CD4-positive, alpha-beta memory T cell (primary cell): ENCODE measurements at regions of chr7 and their contacts with region 1.

Region 1: GRCh38 chr7:39465055-39465929 is 100.9 kb upstream of the YAE1 start:
- DNase-seq: peak in 4 of 5 donors; percentile 16 to 25 (median 19)
- H3K4me3 ChIP-seq: no peak overlapping the region
- H3K4me3 Mint-ChIP-seq: peak overlapping the region in 2 of 8 donors; percentile 17 to 46
- H3K27ac ChIP-seq: no peak overlapping the region
- H3K27ac Mint-ChIP-seq: no peak overlapping the region
- H3K4me1 ChIP-seq: no peaks in the 10 kb centered on the region
- H3K4me1 Mint-ChIP-seq: peaks cover 2 to 9% (median 5%) of the 10 kb centered on the region in 4 donors
- H3K27me3 ChIP-seq: no peaks in the 10 kb centered on the region
- H3K27me3 Mint-ChIP-seq: peaks cover 3 to 16% of the 10 kb centered on the region in 2 donors

Region 2: GRCh38 chr7:38600746-38601145 is 864.5 kb before region 1 on chr7:
- CTCF ChIA-PET with region 1: no interaction called
- POLR2A ChIA-PET with region 1: no interaction called
- intact Hi-C with region 1: no loop called
- DNase-seq: no peak
- H3K4me3 ChIP-seq: no peak overlapping the region
- H3K4me3 Mint-ChIP-seq: no peak overlapping the region
- H3K27ac ChIP-seq: no peak overlapping the region
- H3K27ac Mint-ChIP-seq: no peak overlapping the region
- H3K4me1 ChIP-seq: no peaks in the 10 kb centered on the region
- H3K4me1 Mint-ChIP-seq: no peaks in the 10 kb centered on the region
- H3K27me3 ChIP-seq: no peaks in the 10 kb centered on the region
- H3K27me3 Mint-ChIP-seq: no peaks in the 10 kb centered on the region

Region 3: DNA sequence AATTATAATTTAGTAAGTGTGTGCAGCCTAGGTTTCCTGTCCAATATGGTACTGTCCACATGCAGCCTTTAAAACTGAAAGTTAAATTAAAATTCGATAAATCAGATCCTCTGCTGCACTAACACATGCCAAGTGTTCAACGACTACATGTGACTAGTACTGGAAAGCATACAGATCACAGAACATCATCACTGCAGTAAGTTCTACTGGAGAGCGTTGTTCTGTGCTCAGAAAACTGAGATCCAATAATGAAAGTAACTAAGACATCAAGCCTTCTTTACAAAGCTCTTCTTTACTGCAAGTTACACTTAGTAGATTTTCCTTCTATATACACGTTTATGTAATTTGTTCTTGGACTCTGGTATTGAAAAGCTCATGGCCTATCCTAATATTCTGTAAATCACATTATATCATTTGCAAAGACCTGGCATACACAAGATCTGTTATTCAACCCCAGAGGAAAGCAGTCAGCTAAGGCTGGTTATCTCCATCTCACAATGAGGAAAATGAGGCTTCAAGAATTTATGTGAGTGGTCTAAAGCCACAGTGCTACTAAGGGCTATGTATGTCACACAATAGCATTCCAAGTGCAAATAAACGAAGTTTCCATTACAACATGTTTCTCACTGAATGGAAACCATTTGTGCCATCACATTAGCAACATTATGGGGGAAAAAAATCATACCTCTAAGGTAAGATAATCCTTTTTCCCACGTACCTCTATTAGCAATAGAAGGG is 633.9 kb before region 1 on chr7:
- CTCF ChIA-PET with region 1: no interaction called
- POLR2A ChIA-PET with region 1: no interaction called
- intact Hi-C with region 1: no loop called
- DNase-seq: no peak
- H3K4me3 ChIP-seq: no peak overlapping the region
- H3K4me3 Mint-ChIP-seq: no peak overlapping the region
- H3K27ac ChIP-seq: no peak overlapping the region
- H3K27ac Mint-ChIP-seq: no peak overlapping the region
- H3K4me1 ChIP-seq: no peaks in the 10 kb centered on the region
- H3K4me1 Mint-ChIP-seq: peaks cover 0 to 14% (median 12%) of the 10 kb centered on the region in 4 donors
- H3K27me3 ChIP-seq: no peaks in the 10 kb centered on the region
- H3K27me3 Mint-ChIP-seq: no peaks in the 10 kb centered on the region

Region 4: DNA sequence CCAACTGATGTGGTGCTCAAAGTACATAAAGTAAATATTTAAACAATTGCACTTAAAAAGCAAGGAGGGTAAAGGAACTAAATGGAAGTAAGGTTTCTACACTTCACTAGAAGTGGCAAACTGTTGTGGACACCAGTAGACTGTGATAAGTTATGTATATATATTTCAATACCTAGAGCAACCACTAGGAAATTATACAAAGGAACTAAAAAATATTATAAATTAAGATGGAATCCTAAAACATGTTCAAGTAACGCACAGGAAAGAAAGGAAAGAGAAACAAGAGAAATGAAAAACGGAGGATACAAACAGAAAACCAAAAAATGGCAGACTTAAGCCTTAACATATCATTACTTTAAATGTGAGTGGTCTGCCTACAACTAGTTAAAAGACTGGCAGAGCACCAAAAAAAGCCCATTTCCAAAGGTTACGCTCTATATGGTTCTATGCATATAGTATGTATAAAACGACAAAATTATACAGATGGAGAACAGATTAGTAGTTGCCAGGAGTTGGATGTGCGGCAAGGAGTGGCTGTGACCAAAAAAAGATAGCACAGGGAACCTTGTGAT is 575.3 kb before region 1 on chr7:
- CTCF ChIA-PET with region 1: no interaction called
- POLR2A ChIA-PET with region 1: no interaction called
- intact Hi-C with region 1: no loop called
- DNase-seq: no peak
- H3K4me3 ChIP-seq: no peak overlapping the region
- H3K4me3 Mint-ChIP-seq: no peak overlapping the region
- H3K27ac ChIP-seq: no peak overlapping the region
- H3K27ac Mint-ChIP-seq: no peak overlapping the region
- H3K4me1 ChIP-seq: no peaks in the 10 kb centered on the region
- H3K4me1 Mint-ChIP-seq: peaks cover 17 to 32% (median 23%) of the 10 kb centered on the region in 4 donors
- H3K27me3 ChIP-seq: no peaks in the 10 kb centered on the region
- H3K27me3 Mint-ChIP-seq: no peaks in the 10 kb centered on the region

Region 5: DNA sequence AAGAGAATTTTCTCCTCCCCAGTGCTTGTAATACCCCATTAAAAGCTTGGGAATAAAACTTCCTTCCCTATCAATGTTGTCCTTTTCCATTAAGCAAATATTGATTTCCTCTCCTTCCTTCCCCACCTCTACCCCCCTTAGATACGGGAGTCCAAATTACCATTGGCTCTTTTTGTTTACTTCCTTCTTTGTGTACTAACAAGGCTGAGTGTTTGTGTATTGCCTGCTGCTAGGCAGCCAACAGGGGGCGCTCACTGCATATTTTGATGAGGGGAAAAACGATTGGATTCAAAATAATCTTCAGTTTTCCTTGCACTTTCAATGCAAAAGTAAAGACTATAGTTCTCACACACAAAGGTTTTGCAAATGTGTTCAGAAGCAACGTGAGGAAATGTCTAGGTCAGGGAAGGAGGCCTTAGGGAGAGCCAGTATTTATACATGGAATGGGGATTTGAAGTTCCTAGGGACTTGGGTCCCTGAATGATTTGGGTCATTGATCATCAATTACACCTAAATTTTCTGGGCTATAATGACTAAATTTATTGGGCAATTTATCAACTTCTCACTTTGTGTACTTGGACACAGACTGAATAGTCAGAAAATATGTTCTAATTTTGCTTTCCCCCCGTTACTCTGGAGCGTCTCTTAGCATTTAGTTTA is 532.7 kb before region 1 on chr7:
- CTCF ChIA-PET with region 1: interaction called, 3 read pairs
- POLR2A ChIA-PET with region 1: no interaction called
- intact Hi-C with region 1: loop called (anchors 10 kb)
- DNase-seq: peak in 4 of 5 donors; percentile 1 to 18 (median 10)
- H3K4me3 ChIP-seq: no peak overlapping the region
- H3K4me3 Mint-ChIP-seq: peak overlapping the region in 1 of 8 donors; percentile 11
- H3K27ac ChIP-seq: no peak overlapping the region
- H3K27ac Mint-ChIP-seq: no peak overlapping the region
- H3K4me1 ChIP-seq: no peaks in the 10 kb centered on the region
- H3K4me1 Mint-ChIP-seq: peaks cover 0 to 2% (median 1%) of the 10 kb centered on the region in 4 donors
- H3K27me3 ChIP-seq: no peaks in the 10 kb centered on the region
- H3K27me3 Mint-ChIP-seq: peaks cover 6% of the 10 kb centered on the region in 2 donors

Region 6: DNA sequence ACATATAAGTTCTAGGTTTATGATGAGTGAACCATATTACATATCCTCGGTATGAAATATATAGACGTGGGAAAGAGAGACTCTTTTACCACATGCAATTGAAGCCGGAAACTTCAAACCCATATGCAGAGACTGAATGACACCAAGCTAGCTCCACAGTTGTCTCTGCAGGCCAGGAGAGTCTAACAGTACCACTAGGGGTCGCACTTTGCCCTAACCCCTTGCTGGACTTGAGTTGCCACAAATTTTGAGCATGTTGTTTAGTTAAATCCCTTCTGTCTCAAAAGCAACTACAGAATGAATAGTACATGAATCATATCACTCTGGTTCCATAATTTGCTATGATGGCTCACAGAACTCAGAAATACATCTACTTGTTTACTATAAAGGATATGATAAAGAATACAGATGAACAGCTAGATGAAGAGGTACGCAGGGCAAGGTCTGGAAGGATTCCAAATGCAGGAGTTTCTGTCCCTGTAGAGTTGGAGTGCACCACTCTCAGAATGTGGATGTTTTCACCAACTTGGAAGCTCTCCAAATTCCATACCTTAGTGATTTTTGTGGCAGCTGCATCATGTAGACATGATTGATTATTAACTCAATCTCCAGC is 11.4 kb before region 1 on chr7:
- CTCF ChIA-PET with region 1: interaction called, 34 read pairs
- POLR2A ChIA-PET with region 1: no interaction called
- intact Hi-C with region 1: no loop called
- DNase-seq: peak in 4 of 5 donors; percentile 26 to 35 (median 32)
- H3K4me3 ChIP-seq: no peak overlapping the region
- H3K4me3 Mint-ChIP-seq: no peak overlapping the region
- H3K27ac ChIP-seq: no peak overlapping the region
- H3K27ac Mint-ChIP-seq: no peak overlapping the region
- H3K4me1 ChIP-seq: no peaks in the 10 kb centered on the region
- H3K4me1 Mint-ChIP-seq: peaks cover 0 to 1% (median 0%) of the 10 kb centered on the region in 4 donors
- H3K27me3 ChIP-seq: no peaks in the 10 kb centered on the region
- H3K27me3 Mint-ChIP-seq: peaks cover 10 to 12% of the 10 kb centered on the region in 2 donors